Naive thymus-derived CD4-positive, alpha-beta T cell (primary cell): ENCODE measurements at regions of chr16 and their contacts with region 1.

Region 1: DNA sequence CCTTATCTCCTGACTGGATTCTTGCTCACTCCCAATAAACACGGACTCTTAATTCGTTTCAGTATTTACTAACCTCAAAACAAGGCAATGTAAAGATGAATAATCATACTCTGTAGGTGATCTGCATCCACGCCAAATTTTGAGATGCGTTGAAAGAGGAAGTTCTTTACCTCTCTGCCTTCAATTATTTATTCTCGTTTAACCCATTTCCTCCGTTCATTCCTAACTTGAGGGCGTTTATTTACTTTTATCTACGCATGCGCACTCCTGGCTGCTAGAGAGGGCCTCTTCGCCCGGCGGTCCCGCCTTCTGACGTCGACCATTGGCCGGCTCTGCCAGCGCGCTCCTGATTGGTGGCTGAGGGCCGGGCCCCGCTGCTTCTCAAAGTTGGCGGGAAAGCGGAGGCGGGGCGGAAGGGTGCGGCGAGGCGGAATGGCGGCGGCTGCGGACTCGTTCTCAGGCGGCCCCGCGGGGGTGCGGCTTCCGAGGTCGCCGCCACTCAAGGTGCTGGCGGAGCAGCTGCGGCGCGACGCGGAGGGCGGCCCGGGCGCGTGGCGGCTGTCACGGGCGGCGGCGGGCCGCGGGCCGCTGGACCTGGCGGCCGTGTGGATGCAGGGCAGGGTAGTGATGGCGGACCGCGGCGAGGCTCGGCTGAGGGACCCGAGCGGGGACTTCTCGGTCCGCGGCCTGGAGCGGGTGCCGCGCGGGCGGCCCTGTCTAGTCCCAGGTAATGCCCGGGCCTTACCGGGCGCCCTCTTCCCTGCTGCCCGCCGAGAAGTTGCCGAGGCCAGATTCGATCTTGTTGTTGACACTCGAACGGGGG is at the start of gene RMI2:
- DNase-seq: peak; percentile 90 to 98 (median 95)
- ATAC-seq: peak; percentile 99
- H3K4me3 ChIP-seq: peak within 1 kb of the TSS; percentile 44
- H3K4me3 Mint-ChIP-seq: peak within 1 kb of the TSS; percentile 79 to 98 (median 92)
- H3K27ac ChIP-seq: peak within 1 kb of the TSS; percentile 65
- H3K27ac Mint-ChIP-seq: peak within 1 kb of the TSS; percentile 58 to 99 (median 83)
- H3K4me1 ChIP-seq: no peaks in the 10 kb centered on the region
- H3K4me1 Mint-ChIP-seq: peaks cover 10 to 49% (median 24%) of the 10 kb centered on the region in 7 donors
- H3K27me3 ChIP-seq: no peaks in the 10 kb centered on the region
- H3K27me3 Mint-ChIP-seq: no peaks in the 10 kb centered on the region
- total RNA-seq, gene RMI2: 1.8 to 57.0 (median 3.3) TPM

Region 2: DNA sequence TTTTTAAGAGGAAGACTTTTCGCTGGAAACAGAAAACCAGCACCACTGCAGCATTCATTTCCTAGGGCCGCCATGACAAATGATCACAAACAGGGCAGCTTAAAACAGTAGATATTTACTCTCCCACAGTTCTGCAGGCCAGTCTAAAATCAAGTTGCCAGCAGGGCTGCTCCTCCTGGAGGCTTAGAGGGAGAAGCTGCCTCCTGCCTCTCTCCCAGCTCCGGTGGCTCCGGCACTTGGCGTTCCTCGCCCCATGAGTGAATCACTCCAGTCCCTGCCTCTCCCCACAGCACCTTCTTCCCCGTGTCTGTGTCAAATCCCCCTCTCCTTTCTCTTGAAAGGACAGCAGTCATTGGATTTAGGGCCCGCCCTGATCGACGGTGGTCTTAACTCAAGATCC is 161.3 kb before region 1 on chr16:
- CTCF ChIA-PET with region 1: no interaction called
- POLR2A ChIA-PET with region 1: no interaction called
- intact Hi-C with region 1: no loop called
- DNase-seq: no peak
- ATAC-seq: no peak
- H3K4me3 ChIP-seq: no peak overlapping the region
- H3K4me3 Mint-ChIP-seq: no peak overlapping the region
- H3K27ac ChIP-seq: no peak overlapping the region
- H3K27ac Mint-ChIP-seq: peak overlapping the region in 5 of 9 donors; percentile 1 to 58 (median 28)
- H3K4me1 ChIP-seq: no peaks in the 10 kb centered on the region
- H3K4me1 Mint-ChIP-seq: peaks cover 0 to 45% (median 0%) of the 10 kb centered on the region in 7 donors
- H3K27me3 ChIP-seq: no peaks in the 10 kb centered on the region
- H3K27me3 Mint-ChIP-seq: no peaks in the 10 kb centered on the region

Region 3: GRCh38 chr16:11312718-11313492 is 32.3 kb before region 1 on chr16:
- CTCF ChIA-PET with region 1: no interaction called
- POLR2A ChIA-PET with region 1: no interaction called
- intact Hi-C with region 1: loop called (anchors 1 to 2 kb)
- DNase-seq: peak in 2 of 9 donors; percentile 15 to 17
- ATAC-seq: peak; percentile 17
- H3K4me3 ChIP-seq: peak overlapping the region; percentile 23
- H3K4me3 Mint-ChIP-seq: peak overlapping the region; percentile 35 to 72 (median 58)
- H3K27ac ChIP-seq: no peak overlapping the region
- H3K27ac Mint-ChIP-seq: peak overlapping the region; percentile 11 to 91 (median 75)
- H3K4me1 ChIP-seq: peaks cover 23 to 34% of the 10 kb centered on the region in 2 donors
- H3K4me1 Mint-ChIP-seq: peaks cover 5 to 69% (median 31%) of the 10 kb centered on the region in 7 donors
- H3K27me3 ChIP-seq: no peaks in the 10 kb centered on the region
- H3K27me3 Mint-ChIP-seq: peaks cover 0 to 2% (median 0%) of the 10 kb centered on the region in 5 donors

Region 4: DNA sequence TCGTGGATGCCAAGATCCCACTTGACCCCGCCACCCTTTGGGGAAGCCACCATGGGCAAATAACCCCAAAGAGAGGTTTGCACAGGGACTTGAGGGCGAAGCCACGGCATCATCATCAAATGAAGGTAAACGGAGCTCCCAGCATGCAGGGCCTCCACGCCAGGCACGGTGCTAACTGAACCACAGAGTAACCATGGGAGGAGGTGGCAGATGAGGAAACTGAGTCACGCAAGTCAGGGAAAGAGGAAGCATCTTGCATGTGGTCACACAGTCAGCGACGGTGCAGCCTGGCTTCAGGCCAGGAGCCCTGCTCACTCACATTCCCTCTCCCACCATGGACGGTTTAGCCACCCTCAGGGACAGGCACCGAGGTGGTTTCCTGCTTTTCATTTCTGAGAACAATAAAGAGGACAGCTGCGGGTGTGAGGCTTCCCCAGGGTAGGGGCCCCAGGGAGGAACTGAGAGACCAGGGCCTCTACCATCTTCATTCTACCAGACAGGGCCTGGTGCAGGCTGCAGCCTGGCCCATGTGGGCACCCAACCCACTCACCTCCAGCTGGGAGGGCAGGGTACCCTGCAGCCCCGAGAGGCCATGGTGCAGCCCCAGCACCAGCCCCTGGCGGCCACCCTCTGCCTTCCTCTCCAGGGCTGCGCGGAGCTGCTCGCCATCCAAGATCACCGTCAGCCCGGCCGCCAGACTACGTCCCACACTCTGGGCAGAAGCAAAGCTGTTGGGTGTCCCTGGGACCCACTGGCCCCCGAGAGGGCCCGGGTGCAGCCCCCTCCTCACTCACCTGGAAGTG is 78.3 kb after region 1 on chr16:
- CTCF ChIA-PET with region 1: no interaction called
- POLR2A ChIA-PET with region 1: no interaction called
- intact Hi-C with region 1: no loop called
- DNase-seq: no peak
- ATAC-seq: peak; percentile 32
- H3K4me3 ChIP-seq: no peak overlapping the region
- H3K4me3 Mint-ChIP-seq: no peak overlapping the region
- H3K27ac ChIP-seq: no peak overlapping the region
- H3K27ac Mint-ChIP-seq: no peak overlapping the region
- H3K4me1 ChIP-seq: no peaks in the 10 kb centered on the region
- H3K4me1 Mint-ChIP-seq: peaks cover 0 to 7% (median 0%) of the 10 kb centered on the region in 7 donors
- H3K27me3 ChIP-seq: no peaks in the 10 kb centered on the region
- H3K27me3 Mint-ChIP-seq: peaks cover 0 to 2% (median 0%) of the 10 kb centered on the region in 5 donors